ENCODE measurements at regions of chr12 and their contacts with region 1.

Region 1: DNA sequence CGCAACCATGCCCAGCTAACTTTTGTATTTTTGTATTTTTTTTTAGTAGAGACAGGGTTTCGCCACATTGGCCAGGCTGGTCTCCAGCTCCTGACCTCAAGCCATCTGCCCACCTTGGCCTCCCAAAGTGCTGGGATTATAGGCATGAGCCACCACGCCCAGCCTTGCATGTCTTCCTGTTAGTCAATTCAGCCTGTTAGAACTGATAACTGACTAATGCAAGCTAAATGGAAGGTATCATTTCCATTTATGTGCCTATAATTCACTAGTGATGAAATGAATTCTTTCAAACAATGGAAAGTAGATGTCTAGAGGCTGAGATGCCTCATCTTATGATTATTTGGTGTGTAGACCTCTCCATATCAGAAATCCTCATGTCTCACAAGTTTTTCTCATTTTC is 37.3 kb upstream of the DIP2B start:
- DNase-seq: no peak
- ATAC-seq: no peak
- H3K4me3 Mint-ChIP-seq: no peak overlapping the region
- H3K27ac Mint-ChIP-seq: no peak overlapping the region
- H3K4me1 Mint-ChIP-seq: no peaks in the 10 kb centered on the region
- H3K27me3 Mint-ChIP-seq: no peaks in the 10 kb centered on the region

Region 2: GRCh38 chr12:50718760-50719159 is 251.3 kb after region 1 on chr12:
- CTCF ChIA-PET with region 1: no interaction called
- POLR2A ChIA-PET with region 1: interaction called, 10 read pairs
- intact Hi-C with region 1: no loop called
- DNase-seq: no peak
- ATAC-seq: no peak
- H3K4me3 Mint-ChIP-seq: no peak overlapping the region
- H3K27ac Mint-ChIP-seq: no peak overlapping the region
- H3K4me1 Mint-ChIP-seq: no peaks in the 10 kb centered on the region
- H3K27me3 Mint-ChIP-seq: no peaks in the 10 kb centered on the region